ENCODE measurements at regions of chr1 and their contacts with region 1.

Region 1: GRCh38 chr1:224851210-224851847 is 78.1 kb upstream of the DNAH14 start:
- DNase-seq: peak; percentile 62 to 77
- H3K4me3 ChIP-seq: no peak overlapping the region
- H3K27ac ChIP-seq: no peak overlapping the region
- H3K4me1 ChIP-seq: no peaks in the 10 kb centered on the region
- H3K27me3 ChIP-seq: no peaks in the 10 kb centered on the region
- CTCF ChIP-seq: peak in 4 of 7 experiments; percentile 29 to 50 (median 36)
- EP300 ChIP-seq: no peak
- POLR2A ChIP-seq: no peak

Region 2: GRCh38 chr1:224513787-224514209 is 337.5 kb before region 1 on chr1:
- intact Hi-C with region 1: loop called (anchors 10 kb)
- DNase-seq: peak; percentile 90 to 92
- H3K4me3 ChIP-seq: no peak overlapping the region
- H3K27ac ChIP-seq: no peak overlapping the region
- H3K4me1 ChIP-seq: peaks cover 0 to 25% (median 12%) of the 10 kb centered on the region in 4 donors
- H3K27me3 ChIP-seq: no peaks in the 10 kb centered on the region
- CTCF ChIP-seq: peak in 5 of 7 experiments; percentile 71 to 96 (median 89)
- EP300 ChIP-seq: no peak
- POLR2A ChIP-seq: no peak

Region 3: GRCh38 chr1:224644553-224645154 is 206.7 kb before region 1 on chr1:
- intact Hi-C with region 1: loop called (anchors 10 kb)
- DNase-seq: peak; percentile 39 to 74
- H3K4me3 ChIP-seq: no peak overlapping the region
- H3K27ac ChIP-seq: no peak overlapping the region
- H3K4me1 ChIP-seq: peaks cover 3 to 14% (median 8%) of the 10 kb centered on the region in 4 donors
- H3K27me3 ChIP-seq: no peaks in the 10 kb centered on the region
- CTCF ChIP-seq: peak in 5 of 7 experiments; percentile 55 to 89 (median 84)
- EP300 ChIP-seq: no peak
- POLR2A ChIP-seq: no peak

Region 4: DNA sequence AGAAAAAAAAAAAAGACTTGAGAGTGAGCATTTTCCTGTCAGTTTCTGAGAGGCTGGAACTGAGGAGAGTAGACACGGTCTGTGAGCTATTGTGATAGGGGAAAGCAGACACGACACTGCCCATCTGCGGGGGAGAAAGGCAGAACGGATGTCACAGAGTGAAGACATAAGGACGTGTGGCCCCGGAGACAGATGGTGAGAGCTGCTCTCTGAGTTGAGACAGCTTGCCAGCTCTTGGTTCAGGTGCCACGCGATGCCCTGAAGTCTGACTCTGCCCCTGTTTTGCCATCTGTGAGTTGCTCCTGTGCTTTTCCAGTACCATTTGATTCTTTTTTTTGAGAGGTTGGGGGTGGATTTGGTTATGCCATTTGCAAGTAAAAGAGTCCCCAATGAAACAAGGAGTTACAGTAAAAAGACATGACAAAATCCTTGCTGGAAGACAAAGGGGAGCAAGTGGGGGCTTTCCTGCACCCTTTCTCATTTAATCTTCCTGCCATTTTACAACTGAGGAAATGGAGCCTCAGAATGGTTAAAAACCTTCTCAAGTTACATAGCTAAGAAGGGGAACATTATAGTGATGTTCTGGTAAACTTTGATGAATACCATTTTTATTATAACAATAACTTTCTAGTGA is 50.7 kb before region 1 on chr1:
- intact Hi-C with region 1: no loop called
- DNase-seq: no peak
- H3K4me3 ChIP-seq: no peak overlapping the region
- H3K27ac ChIP-seq: no peak overlapping the region
- H3K4me1 ChIP-seq: no peaks in the 10 kb centered on the region
- H3K27me3 ChIP-seq: no peaks in the 10 kb centered on the region
- CTCF ChIP-seq: no peak
- EP300 ChIP-seq: no peak
- POLR2A ChIP-seq: no peak